ENCODE measurements at regions of chr17 and their contacts with region 1.

Region 1: DNA sequence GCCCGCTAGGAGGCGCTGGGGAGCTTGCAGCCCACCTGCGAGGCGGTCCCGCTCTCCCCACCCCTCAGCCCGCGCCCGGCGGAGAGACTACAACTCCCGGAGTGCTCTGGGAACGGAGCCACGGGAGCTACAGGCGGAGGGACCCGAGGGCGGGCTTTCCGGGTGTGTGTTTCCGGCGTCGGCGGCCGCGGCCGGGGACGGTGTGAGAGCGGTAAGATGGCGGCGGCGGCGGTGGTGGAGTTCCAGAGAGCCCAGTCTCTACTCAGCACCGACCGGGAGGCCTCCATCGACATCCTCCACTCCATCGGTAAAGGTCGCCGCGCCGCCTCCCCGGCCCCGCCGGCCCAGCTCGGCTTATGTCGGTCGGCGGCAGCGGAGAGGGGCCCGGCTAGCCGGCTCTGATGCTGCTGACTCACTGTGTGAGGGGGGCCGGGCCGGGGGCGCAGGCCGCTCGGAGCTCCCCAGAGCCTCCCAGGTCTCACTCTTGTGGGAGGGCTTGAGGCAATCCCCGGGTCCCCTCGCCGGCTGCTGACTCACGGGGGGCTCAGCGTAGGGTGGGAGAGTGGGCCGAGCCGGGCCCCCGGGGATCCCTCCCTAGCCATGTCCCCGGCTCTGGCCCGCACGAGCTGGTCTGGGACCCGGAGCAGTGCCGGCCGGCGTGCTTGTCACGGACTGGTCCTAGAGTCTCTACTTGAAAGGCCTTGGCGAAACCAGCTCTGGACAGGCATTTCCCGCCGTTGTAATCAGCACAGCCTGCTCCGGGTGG is at the start of gene PSMD11:
- DNase-seq: peak; percentile 95
- H3K4me3 ChIP-seq: peak within 1 kb of the TSS; percentile 90 to 96 (median 93)
- H3K27ac ChIP-seq: peak within 1 kb of the TSS; percentile 93
- H3K4me1 ChIP-seq: peaks cover 23% of the 10 kb centered on the region
- H3K27me3 ChIP-seq: peaks cover 2% of the 10 kb centered on the region
- CTCF ChIP-seq: peak in 1 of 2 donors; percentile 68
- total RNA-seq, gene PSMD11: 93.5 to 131 TPM

Region 2: DNA sequence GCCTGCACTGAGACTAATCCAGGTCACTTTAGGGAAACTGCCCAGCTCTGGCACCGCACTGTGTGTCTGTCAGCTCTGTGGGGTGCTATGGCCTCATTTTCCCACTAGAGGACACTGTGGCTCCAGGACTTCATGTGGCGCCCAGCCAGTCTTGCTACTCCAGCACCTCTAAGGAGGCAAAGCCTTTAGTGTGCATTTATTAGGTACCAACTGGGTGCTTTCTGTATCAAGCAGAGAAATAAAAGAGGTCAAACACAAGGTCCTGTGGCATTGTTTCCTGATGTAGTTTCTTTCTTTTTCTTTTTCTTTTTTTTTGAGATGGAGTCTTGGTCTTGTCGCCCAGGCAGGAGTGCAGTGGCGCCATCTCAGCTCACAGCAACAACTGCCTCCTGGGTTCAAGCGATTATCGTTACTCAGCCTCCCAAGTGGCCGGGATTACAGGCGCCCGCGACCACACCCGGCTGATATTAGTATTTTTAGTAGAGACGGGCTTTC is 191.3 kb before region 1 on chr17:
- CTCF ChIA-PET with region 1: no interaction called
- dilution Hi-C with region 1: no loop called
- in situ Hi-C with region 1: no loop called
- intact Hi-C with region 1: loop called (anchors 2 kb)
- DNase-seq: peak; percentile 61
- H3K4me3 ChIP-seq: no peak overlapping the region
- H3K27ac ChIP-seq: no peak overlapping the region
- H3K4me1 ChIP-seq: no peaks in the 10 kb centered on the region
- H3K27me3 ChIP-seq: peaks cover 2% of the 10 kb centered on the region
- CTCF ChIP-seq: peak; percentile 100

Region 3: GRCh38 chr17:32349854-32350665 is 94.4 kb before region 1 on chr17 and contains the start of gene ZNF207:
- CTCF ChIA-PET with region 1: no interaction called
- dilution Hi-C with region 1: no loop called
- in situ Hi-C with region 1: no loop called
- intact Hi-C with region 1: loop called (anchors 5 kb)
- DNase-seq: peak; percentile 94
- H3K4me3 ChIP-seq: peak within 1 kb of the TSS; percentile 63 to 98 (median 96)
- H3K27ac ChIP-seq: peak within 1 kb of the TSS; percentile 99
- H3K4me1 ChIP-seq: peaks cover 20% of the 10 kb centered on the region
- H3K27me3 ChIP-seq: no peaks in the 10 kb centered on the region
- CTCF ChIP-seq: peak in 1 of 2 donors; percentile 4
- total RNA-seq, gene ZNF207: 134 to 169 TPM

Region 4: GRCh38 chr17:32909787-32910369 is 465.4 kb after region 1 on chr17:
- CTCF ChIA-PET with region 1: no interaction called
- dilution Hi-C with region 1: no loop called
- in situ Hi-C with region 1: loop called in 1 of 2 experiments (anchors 25 kb)
- intact Hi-C with region 1: no loop called
- DNase-seq: peak; percentile 69
- H3K4me3 ChIP-seq: no peak overlapping the region
- H3K27ac ChIP-seq: no peak overlapping the region
- H3K4me1 ChIP-seq: no peaks in the 10 kb centered on the region
- H3K27me3 ChIP-seq: no peaks in the 10 kb centered on the region
- CTCF ChIP-seq: peak; percentile 87 to 88

Measured in mammary epithelial cell (primary cell).